ENCODE measurements at regions of chr1 and their contacts with region 1.

Region 1: DNA sequence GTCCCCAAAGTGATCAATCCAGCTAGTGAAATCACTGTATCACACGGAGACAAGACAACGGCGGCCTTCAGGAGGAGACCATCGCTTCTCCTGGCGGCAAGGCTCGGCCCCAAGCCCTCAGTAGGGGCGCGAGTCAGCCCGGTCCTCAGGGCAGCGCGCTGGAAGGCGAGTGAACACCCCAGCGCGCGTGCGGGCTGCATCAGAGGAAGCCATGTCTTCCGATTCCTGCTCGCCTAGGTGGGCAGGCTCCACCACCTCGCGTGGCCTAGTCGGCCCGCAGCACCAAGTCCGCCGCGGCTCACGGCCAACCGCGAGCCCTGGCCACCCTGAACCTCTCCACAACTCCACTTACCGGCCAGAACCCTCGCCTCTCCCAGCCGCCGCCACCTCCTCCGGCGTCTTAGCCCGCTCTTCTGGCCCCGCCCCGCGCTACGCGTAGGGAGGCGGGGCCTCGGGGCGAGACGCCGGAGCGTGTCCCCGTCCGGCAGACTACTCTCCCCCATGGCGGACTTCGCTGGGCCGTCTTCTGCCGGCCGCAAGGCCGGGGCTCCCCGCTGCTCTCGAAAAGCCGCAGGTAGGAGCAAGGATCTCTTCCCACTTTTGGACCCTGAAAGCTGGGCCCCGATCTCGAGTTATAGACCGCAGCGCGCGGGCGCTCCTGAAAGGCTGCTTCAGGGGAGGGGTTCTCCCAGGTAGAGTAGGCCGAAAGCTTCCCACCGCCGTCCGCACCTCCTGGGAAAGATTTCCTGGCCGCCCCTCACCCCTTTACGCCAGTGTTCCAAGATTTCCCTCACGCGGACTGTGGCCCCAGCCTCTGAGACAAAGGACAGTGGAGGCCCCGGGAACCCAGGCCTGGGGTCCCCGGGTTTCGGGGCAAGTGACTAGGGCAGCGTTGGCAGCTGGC is at the starts of genes GLMN and RPAP2:
- DNase-seq: peak; percentile 69
- H3K4me3 Mint-ChIP-seq: peak within 1 kb of the TSS; percentile 86
- H3K27ac Mint-ChIP-seq: peak within 1 kb of the TSS; percentile 88
- H3K4me1 Mint-ChIP-seq: peaks cover 34% of the 10 kb centered on the region
- H3K27me3 Mint-ChIP-seq: no peaks in the 10 kb centered on the region
- total RNA-seq, gene GLMN: 14.0 to 15.3 TPM
- total RNA-seq, gene RPAP2: 21.0 to 21.9 TPM

Region 2: GRCh38 chr1:91500756-91501522 is 797.9 kb before region 1 on chr1 and contains the start of gene CDC7:
- CTCF ChIA-PET with region 1: no interaction called
- intact Hi-C with region 1: loop called (anchors 5 kb)
- DNase-seq: peak; percentile 87
- H3K4me3 Mint-ChIP-seq: no peak within 1 kb of the TSS
- H3K27ac Mint-ChIP-seq: no peak within 1 kb of the TSS
- H3K4me1 Mint-ChIP-seq: peaks cover 15% of the 10 kb centered on the region
- H3K27me3 Mint-ChIP-seq: no peaks in the 10 kb centered on the region
- total RNA-seq, gene CDC7: 27.0 TPM

Region 3: DNA sequence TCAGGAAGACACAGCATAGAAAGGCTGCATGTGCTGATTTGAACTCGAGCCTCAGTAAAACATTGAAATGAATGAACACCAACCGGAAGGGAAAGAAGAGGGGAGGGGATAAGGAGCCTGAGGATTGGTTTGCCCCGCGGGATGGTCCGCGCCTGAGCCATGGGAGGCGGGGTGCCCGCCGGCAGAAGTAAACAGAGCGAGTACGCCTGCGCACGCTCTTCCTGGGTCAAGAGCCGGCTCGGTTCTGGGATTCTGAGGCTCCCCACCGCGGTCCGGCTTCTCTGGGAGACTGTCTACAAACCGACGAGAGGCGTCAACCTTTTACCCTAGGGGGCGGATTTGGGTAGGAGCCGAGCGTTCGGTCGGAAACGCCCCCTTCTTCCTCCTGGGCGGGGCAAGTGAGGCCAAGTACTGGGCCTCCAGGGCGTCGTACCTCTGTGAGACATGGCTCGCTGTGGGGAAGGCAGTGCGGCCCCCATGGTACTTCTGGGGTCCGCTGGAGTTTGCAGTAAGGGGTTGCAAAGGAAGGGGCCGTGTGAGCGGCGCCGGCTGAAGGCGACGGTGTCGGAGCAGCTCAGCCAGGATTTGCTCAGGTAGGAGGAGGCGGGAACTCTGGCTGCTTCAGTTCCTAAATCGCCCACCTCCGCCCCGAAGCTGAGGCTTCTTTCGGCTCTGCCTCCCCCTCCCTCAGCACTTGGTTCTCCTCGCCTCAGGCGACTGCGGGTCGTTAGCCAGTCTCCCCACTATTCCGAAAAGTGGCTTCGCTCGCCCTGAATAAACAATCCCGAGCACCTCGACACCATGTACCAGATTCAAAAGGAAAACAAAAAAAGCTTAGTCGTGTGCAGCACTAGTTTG is 218.5 kb before region 1 on chr1 and contains the start of gene BTBD8:
- CTCF ChIA-PET with region 1: no interaction called
- intact Hi-C with region 1: loop called (anchors 1 kb)
- DNase-seq: peak; percentile 90
- H3K4me3 Mint-ChIP-seq: peak within 1 kb of the TSS; percentile 93
- H3K27ac Mint-ChIP-seq: peak within 1 kb of the TSS; percentile 80
- H3K4me1 Mint-ChIP-seq: peaks cover 9% of the 10 kb centered on the region
- H3K27me3 Mint-ChIP-seq: no peaks in the 10 kb centered on the region
- total RNA-seq, gene BTBD8: 2.0 to 2.7 TPM

Region 4: GRCh38 chr1:92274939-92275338 is 23.9 kb before region 1 on chr1:
- CTCF ChIA-PET with region 1: no interaction called
- intact Hi-C with region 1: no loop called
- DNase-seq: no peak
- H3K4me3 Mint-ChIP-seq: no peak overlapping the region
- H3K27ac Mint-ChIP-seq: no peak overlapping the region
- H3K4me1 Mint-ChIP-seq: no peaks in the 10 kb centered on the region
- H3K27me3 Mint-ChIP-seq: no peaks in the 10 kb centered on the region

Region 5: GRCh38 chr1:92317836-92318493 is 19.1 kb after region 1 on chr1:
- CTCF ChIA-PET with region 1: interaction called, 4 read pairs
- intact Hi-C with region 1: loop called (anchors 1 kb)
- DNase-seq: no peak
- H3K4me3 Mint-ChIP-seq: no peak overlapping the region
- H3K27ac Mint-ChIP-seq: no peak overlapping the region
- H3K4me1 Mint-ChIP-seq: peaks cover 55% of the 10 kb centered on the region
- H3K27me3 Mint-ChIP-seq: no peaks in the 10 kb centered on the region

Region 6: DNA sequence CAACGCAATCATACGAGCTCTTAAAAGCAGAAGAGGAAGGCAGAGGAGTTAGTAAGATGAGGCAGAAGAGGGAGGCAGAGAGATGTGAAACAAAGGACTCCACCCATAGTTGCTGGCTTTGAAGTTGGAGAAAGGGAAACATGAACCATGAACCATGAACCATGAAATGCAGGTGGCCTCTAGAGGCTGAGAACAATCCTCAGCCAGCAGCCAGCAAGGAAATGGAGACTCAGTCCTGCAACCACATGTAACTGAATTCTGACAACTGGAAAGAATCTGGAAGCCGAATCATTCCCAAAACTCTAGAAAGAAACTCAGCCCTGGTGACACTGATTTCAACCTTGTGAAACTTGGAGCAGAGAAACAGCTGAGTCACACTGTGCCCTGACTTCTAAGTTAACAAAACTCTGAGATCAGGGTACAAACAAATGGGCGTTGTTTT is 652.3 kb after region 1 on chr1:
- CTCF ChIA-PET with region 1: no interaction called
- intact Hi-C with region 1: loop called (anchors 5 kb)
- DNase-seq: peak; percentile 48
- H3K4me3 Mint-ChIP-seq: no peak overlapping the region
- H3K27ac Mint-ChIP-seq: no peak overlapping the region
- H3K4me1 Mint-ChIP-seq: peaks cover 41% of the 10 kb centered on the region
- H3K27me3 Mint-ChIP-seq: no peaks in the 10 kb centered on the region